Activated CD4-positive, alpha-beta T cell treated with anti-CD3 and anti-CD28 coated beads, Interleukin-2, amount 10 ng/mL, durations not matched to agents 24 days and 14 days (primary cell): ENCODE measurements at regions of chr10 and their contacts with region 1.

Region 1: GRCh38 chr10:110210674-110211464 is 3.5 kb downstream of the MXI1 start:
- DNase-seq: peak; percentile 98
- H3K4me3 Mint-ChIP-seq: peak overlapping the region; percentile 91
- H3K27ac Mint-ChIP-seq: peak overlapping the region; percentile 98
- H3K4me1 Mint-ChIP-seq: peaks cover 68% of the 10 kb centered on the region
- H3K27me3 Mint-ChIP-seq: peaks cover 8% of the 10 kb centered on the region

Region 2: GRCh38 chr10:110067960-110068770 is 142.7 kb before region 1 on chr10:
- intact Hi-C with region 1: loop called (anchors 2 kb)
- DNase-seq: peak; percentile 92
- H3K4me3 Mint-ChIP-seq: peak overlapping the region; percentile 72
- H3K27ac Mint-ChIP-seq: peak overlapping the region; percentile 90
- H3K4me1 Mint-ChIP-seq: peaks cover 72% of the 10 kb centered on the region
- H3K27me3 Mint-ChIP-seq: no peaks in the 10 kb centered on the region

Region 3: GRCh38 chr10:110162741-110163145 is 48.1 kb before region 1 on chr10:
- intact Hi-C with region 1: loop called (anchors 1 kb)
- DNase-seq: no peak
- H3K4me3 Mint-ChIP-seq: no peak overlapping the region
- H3K27ac Mint-ChIP-seq: no peak overlapping the region
- H3K4me1 Mint-ChIP-seq: peaks cover 22% of the 10 kb centered on the region
- H3K27me3 Mint-ChIP-seq: peaks cover 85% of the 10 kb centered on the region

Region 4: GRCh38 chr10:110176141-110177030 is 34.5 kb before region 1 on chr10:
- intact Hi-C with region 1: no loop called
- DNase-seq: no peak
- H3K4me3 Mint-ChIP-seq: no peak overlapping the region
- H3K27ac Mint-ChIP-seq: no peak overlapping the region
- H3K4me1 Mint-ChIP-seq: peaks cover 6% of the 10 kb centered on the region
- H3K27me3 Mint-ChIP-seq: peaks cover 48% of the 10 kb centered on the region

Region 5: DNA sequence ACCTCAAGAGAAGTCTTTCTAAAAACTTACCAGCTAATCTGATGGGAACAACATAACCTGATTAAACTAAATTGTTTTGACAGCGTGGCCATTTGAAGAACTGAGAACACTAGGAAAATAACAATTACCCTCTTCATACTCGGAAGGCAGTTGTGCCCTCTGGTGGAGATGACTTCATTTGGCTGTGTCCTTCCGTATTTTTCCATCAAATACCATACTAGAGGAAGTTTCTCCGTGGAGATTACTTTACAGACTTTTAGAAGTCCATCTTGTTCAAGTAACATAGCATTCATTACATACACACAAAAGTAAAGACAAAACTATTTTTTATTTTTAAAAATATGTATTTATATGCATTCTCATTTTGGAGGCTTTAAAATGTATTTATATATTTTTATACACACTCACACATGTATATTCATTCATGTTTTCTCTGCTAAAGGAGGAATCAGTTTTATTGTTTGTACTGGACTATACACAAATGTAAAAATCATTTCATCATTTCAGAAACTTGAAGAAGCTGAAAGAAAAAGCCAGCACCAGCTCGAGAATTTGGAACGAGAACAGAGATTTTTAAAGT is 68.6 kb after region 1 on chr10:
- intact Hi-C with region 1: loop called (anchors 1 kb)
- DNase-seq: peak; percentile 81
- H3K4me3 Mint-ChIP-seq: no peak overlapping the region
- H3K27ac Mint-ChIP-seq: no peak overlapping the region
- H3K4me1 Mint-ChIP-seq: peaks cover 11% of the 10 kb centered on the region
- H3K27me3 Mint-ChIP-seq: peaks cover 13% of the 10 kb centered on the region

Region 6: GRCh38 chr10:110497438-110498086 is 286.7 kb after region 1 on chr10 and contains the start of gene DUSP5:
- intact Hi-C with region 1: loop called (anchors 5 kb)
- DNase-seq: peak; percentile 99
- H3K4me3 Mint-ChIP-seq: peak within 1 kb of the TSS; percentile 99
- H3K27ac Mint-ChIP-seq: peak within 1 kb of the TSS; percentile 92
- H3K4me1 Mint-ChIP-seq: peaks cover 47% of the 10 kb centered on the region
- H3K27me3 Mint-ChIP-seq: no peaks in the 10 kb centered on the region
- total RNA-seq, gene DUSP5: 76.0 and 79.9 TPM in 2 replicates